ENCODE measurements at regions of chr18 and their contacts with region 1.

Region 1: GRCh38 chr18:54983041-54983686 is 23.9 kb upstream of the CCDC68 start:
- DNase-seq: peak; percentile 43
- H3K4me3 ChIP-seq: no peak overlapping the region
- H3K27ac ChIP-seq: no peak overlapping the region
- H3K4me1 ChIP-seq: no peaks in the 10 kb centered on the region
- CTCF ChIP-seq: peak; percentile 77

Region 2: DNA sequence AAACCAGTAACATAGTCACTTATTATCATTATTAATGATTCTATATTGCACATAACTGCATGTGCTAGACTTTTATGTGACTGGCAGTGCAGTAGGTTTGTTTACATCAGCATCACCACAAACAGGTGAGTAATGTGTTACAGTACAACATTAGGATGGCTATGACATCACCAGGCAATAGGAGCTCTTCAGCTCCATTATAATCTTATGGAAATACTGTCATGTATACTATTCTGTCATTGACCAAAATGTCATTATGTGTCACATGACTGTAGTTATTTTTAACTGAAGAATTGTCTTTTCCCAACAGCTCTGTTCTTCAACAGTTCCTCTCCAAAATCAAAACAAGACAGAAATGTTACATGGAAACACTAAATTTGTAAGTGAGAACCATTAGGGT is 529.2 kb before region 1 on chr18:
- CTCF ChIA-PET with region 1: no interaction called
- POLR2A ChIA-PET with region 1: no interaction called
- intact Hi-C with region 1: loop called (anchors 5 kb)
- DNase-seq: no peak
- H3K4me3 ChIP-seq: no peak overlapping the region
- H3K27ac ChIP-seq: no peak overlapping the region
- H3K4me1 ChIP-seq: no peaks in the 10 kb centered on the region
- CTCF ChIP-seq: no peak

Region 3: DNA sequence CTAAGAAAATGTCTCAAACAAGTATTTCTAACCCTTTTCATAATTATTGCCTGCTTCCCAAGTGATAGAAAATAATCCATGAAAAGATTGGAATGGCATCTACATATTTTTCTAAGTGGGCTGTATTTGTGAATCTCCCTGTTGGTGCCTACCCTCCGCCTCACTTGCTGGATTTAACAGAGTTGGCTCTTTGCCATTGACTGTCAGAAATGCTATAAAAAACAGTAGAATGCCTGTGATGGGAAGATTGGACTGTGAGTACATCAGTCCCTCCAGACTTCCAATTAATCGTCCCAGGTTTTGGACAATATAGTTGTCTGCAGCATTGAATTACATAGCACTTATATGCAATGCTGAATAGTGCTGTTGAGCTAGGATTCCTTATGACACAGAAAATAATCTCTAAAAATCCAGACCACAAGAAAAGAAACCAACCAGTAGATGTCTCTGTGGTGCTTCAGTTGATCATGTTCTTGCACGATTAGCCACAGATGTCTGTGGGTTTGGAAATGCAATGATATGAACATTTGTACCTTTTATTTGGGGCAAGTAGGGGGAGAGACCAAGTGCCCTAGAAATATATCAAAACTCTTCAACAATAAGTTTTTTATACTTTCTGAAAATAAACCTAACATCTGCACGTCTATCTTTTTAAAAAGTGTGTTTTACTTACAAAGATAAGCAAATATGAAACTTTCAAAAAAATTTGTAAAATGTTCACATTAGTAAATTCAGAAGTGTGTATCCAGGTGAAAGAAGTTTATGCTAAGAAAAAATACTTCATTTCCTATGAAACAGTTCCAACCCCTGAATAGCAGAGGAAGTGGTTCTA is 303.6 kb before region 1 on chr18:
- CTCF ChIA-PET with region 1: no interaction called
- POLR2A ChIA-PET with region 1: no interaction called
- intact Hi-C with region 1: loop called (anchors 5 kb)
- DNase-seq: peak; percentile 18
- H3K4me3 ChIP-seq: no peak overlapping the region
- H3K27ac ChIP-seq: no peak overlapping the region
- H3K4me1 ChIP-seq: no peaks in the 10 kb centered on the region
- CTCF ChIP-seq: peak; percentile 60

Region 4: GRCh38 chr18:54946149-54946581 is 37.0 kb before region 1 on chr18:
- CTCF ChIA-PET with region 1: no interaction called
- POLR2A ChIA-PET with region 1: no interaction called
- intact Hi-C with region 1: no loop called
- DNase-seq: no peak
- H3K4me3 ChIP-seq: peak overlapping the region; percentile 36
- H3K27ac ChIP-seq: no peak overlapping the region
- H3K4me1 ChIP-seq: no peaks in the 10 kb centered on the region
- CTCF ChIP-seq: no peak

Region 5: DNA sequence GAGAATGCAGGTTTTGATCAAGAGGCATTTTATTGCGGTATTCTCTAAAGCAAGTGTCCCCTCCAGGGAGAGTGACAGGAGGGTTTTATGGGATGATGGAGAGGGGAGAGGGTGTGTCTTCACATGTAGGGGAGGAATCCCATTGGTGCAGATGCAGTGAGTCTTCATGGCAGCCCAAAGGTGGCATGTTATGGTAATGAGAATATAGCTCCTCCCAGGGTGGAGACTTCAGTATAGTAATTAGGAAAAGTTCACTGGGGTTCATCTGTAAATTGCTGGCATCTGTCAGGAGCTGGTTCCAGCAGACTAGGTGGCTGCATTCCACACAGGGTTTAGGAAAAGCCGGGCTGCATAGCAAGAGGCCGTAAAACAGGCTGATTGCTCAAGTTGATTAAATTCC is 206.8 kb after region 1 on chr18:
- CTCF ChIA-PET with region 1: no interaction called
- POLR2A ChIA-PET with region 1: no interaction called
- intact Hi-C with region 1: no loop called
- DNase-seq: no peak
- H3K4me3 ChIP-seq: no peak overlapping the region
- H3K27ac ChIP-seq: no peak overlapping the region
- H3K4me1 ChIP-seq: no peaks in the 10 kb centered on the region
- CTCF ChIP-seq: no peak